Activated B cell treated with CpG ODN at 0.5 μM for 24 hours (primary cell): ENCODE measurements at regions of chr4 and their contacts with region 1.

Region 1: DNA sequence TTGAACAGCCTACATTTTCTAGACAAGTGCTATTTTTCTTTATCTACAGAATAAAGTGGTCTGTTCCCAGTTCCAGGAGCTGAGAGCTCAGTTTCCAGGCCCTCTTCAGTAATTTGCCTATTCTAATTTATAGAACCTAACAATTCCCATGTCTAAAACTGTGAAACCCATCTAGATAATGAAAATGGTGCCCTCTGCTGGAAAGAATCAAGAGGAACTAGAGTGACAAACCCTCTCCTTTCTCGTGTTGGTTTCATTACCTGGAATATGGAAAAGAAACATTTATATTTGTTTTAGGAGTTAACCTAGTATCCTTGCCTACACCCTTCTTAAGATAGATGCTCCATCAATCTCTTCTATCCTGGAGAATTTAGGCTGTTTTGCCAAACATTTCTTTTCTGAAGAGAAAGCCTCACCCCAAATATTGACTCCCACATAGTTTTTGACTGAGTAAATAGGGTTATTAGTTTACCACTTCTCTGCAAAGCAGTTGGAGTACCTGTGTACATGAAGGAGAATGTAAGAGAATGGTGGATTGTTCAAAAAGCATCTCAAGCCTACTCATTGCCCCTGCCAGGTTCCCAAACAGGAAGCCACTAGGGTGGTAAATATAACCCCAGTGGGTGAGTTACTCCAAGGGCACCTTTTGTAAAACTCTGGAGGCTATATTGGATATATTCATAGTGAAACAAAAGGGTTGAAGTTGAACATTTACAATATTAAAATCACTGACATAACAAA is 121.6 kb downstream of the RASL11B start:
- DNase-seq: no peak
- ATAC-seq: no peak
- H3K4me3 Mint-ChIP-seq: no peak overlapping the region
- H3K27ac Mint-ChIP-seq: no peak overlapping the region
- H3K4me1 Mint-ChIP-seq: no peaks in the 10 kb centered on the region
- H3K27me3 Mint-ChIP-seq: no peaks in the 10 kb centered on the region
- CTCF ChIP-seq: peak; percentile 22

Region 2: GRCh38 chr4:51895813-51896408 is 1087.8 kb before region 1 on chr4:
- CTCF ChIA-PET with region 1: no interaction called
- POLR2A ChIA-PET with region 1: no interaction called
- intact Hi-C with region 1: loop called (anchors 5 kb)
- DNase-seq: no peak
- ATAC-seq: peak; percentile 95
- H3K4me3 Mint-ChIP-seq: no peak overlapping the region
- H3K27ac Mint-ChIP-seq: no peak overlapping the region
- H3K4me1 Mint-ChIP-seq: peaks cover 2% of the 10 kb centered on the region
- H3K27me3 Mint-ChIP-seq: no peaks in the 10 kb centered on the region
- CTCF ChIP-seq: peak; percentile 39

Region 3: GRCh38 chr4:52376132-52376704 is 607.5 kb before region 1 on chr4:
- CTCF ChIA-PET with region 1: interaction called, 44 read pairs
- POLR2A ChIA-PET with region 1: no interaction called
- intact Hi-C with region 1: loop called (anchors 1 kb)
- DNase-seq: no peak
- ATAC-seq: no peak
- H3K4me3 Mint-ChIP-seq: no peak overlapping the region
- H3K27ac Mint-ChIP-seq: no peak overlapping the region
- H3K4me1 Mint-ChIP-seq: no peaks in the 10 kb centered on the region
- H3K27me3 Mint-ChIP-seq: peaks cover 12% of the 10 kb centered on the region
- CTCF ChIP-seq: peak; percentile 45

Region 4: DNA sequence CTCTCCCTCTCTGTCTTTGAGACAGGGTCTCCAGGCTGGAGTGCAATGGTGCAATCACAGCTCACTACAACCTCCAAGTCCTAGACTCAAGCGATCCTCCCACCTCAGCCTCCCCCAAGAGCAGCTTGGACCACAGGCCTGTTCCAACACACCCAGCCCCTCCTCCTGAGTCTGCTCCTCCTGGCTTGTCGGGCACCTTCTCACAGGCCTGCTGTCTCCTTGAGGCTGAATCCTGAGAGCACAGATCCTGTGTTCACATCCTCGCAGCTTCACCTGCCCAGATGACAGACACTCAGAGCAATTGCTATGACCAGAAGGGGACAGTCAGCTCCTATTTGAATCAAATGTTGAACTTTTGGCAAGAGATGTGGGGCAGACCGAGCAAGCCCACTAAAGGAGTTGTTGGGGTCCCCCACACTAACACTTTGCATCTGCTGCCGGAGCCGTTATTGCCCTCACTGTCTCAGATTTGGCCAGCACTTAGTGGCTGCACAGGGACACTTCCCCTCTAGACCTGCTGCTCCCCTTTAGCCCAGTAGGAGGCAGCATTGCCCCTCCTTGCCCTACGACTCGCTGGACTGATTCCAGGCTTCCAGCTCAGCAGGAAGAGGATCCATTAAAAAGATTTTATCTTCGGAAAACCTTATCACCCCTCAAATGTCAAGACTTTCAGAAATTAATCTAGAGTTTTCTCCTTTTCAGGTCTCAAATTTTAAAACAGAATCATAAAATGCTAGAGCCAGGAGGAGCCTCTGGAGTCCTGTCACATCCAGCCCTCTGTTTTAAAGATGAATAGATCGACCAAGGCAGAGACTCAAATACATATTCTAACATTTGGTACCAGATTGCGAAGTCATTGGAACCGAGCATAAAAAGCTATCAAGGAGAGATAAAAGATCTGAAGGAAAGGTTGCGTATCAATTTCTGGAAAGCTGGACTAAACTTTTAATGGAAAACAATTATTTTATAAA is 438.3 kb before region 1 on chr4:
- CTCF ChIA-PET with region 1: interaction called, 116 read pairs
- POLR2A ChIA-PET with region 1: no interaction called
- intact Hi-C with region 1: no loop called
- DNase-seq: peak; percentile 47
- ATAC-seq: peak; percentile 65
- H3K4me3 Mint-ChIP-seq: no peak overlapping the region
- H3K27ac Mint-ChIP-seq: no peak overlapping the region
- H3K4me1 Mint-ChIP-seq: no peaks in the 10 kb centered on the region
- H3K27me3 Mint-ChIP-seq: peaks cover 5% of the 10 kb centered on the region
- CTCF ChIP-seq: no peak

Region 5: DNA sequence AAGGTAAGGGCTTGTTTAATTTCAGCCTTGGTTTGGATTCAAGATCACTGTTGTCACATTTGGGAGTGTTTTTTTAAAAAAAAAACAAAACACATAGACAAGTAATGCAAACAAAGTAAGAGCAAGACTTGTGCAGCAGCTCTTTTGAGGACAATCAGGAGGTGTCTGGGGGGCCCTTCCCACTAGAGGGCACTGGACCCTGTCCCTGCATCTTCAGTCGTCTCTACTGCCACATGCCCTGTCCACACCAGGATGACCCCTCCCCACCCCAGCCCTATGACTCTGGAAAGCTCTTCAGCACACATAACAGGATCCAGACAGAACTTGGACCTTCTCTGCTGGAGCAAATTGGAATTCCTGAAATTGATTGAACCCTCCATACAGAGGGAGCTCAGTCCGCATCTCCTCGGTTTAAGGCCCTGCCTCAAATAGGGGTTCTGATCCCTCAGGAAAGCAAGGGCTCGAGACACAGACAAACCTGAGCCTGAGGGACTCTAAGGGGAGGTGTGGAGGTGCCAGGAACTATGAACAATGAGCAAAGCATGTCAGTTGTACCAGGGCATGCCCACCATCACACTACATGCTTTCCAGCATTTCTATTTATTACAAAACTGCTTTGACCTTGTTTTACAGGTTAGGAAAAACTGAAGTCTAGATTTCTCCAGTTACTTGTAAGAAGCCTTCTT is 395.5 kb before region 1 on chr4:
- CTCF ChIA-PET with region 1: interaction called, 7 read pairs
- POLR2A ChIA-PET with region 1: no interaction called
- intact Hi-C with region 1: loop called (anchors 1 kb)
- DNase-seq: no peak
- ATAC-seq: peak; percentile 47
- H3K4me3 Mint-ChIP-seq: no peak overlapping the region
- H3K27ac Mint-ChIP-seq: no peak overlapping the region
- H3K4me1 Mint-ChIP-seq: no peaks in the 10 kb centered on the region
- H3K27me3 Mint-ChIP-seq: peaks cover 3% of the 10 kb centered on the region
- CTCF ChIP-seq: no peak

Region 6: DNA sequence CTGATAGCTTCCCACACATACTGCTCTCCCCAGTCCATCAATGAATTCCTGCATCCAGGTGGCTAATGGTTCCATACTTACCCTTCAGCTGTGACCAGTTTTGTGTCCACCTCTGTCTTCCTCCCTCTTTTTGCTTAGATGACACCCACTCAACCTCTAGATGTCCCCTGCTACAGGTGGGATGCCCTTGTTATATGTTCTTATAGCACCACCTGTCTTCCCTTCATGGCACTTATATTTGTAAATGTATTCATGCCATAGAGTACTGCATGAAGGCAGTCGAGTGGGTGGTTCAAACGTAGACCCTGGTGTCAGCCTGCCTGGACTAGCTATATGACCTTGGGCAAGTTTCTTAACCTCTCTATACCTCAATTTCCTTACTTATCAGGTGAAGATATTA is 318.1 kb before region 1 on chr4:
- CTCF ChIA-PET with region 1: interaction called, 4 read pairs
- POLR2A ChIA-PET with region 1: no interaction called
- intact Hi-C with region 1: loop called (anchors 2 kb)
- DNase-seq: no peak
- ATAC-seq: peak; percentile 54
- H3K4me3 Mint-ChIP-seq: no peak overlapping the region
- H3K27ac Mint-ChIP-seq: no peak overlapping the region
- H3K4me1 Mint-ChIP-seq: peaks cover 2% of the 10 kb centered on the region
- H3K27me3 Mint-ChIP-seq: peaks cover 15% of the 10 kb centered on the region
- CTCF ChIP-seq: no peak